ENCODE measurements at regions of chr22 and their contacts with region 1.

Region 1: DNA sequence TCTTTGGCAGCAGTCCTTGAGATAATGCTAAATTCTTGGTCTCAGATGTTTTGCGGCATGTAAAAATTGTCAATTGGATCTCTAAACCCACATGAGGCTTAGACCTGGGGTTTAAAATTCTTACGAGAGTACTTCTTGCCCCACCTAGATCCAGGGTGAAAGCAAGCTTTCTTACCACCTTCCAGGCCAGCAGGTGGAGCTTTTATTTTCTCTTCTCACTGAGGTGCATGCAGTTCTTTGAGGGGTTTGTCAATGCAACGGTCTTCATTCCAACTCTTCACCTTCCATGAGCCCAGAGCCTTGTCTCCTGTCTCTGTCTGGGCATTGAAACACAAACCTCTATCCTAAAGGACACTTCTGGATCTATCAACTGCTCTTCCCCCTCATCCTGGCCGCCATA is 154.1 kb downstream of the MYO18B start:
- DNase-seq: no peak
- ATAC-seq: no peak
- H3K4me3 Mint-ChIP-seq: no peak overlapping the region
- H3K27ac Mint-ChIP-seq: no peak overlapping the region
- H3K4me1 Mint-ChIP-seq: no peaks in the 10 kb centered on the region
- H3K27me3 Mint-ChIP-seq: peaks cover 4% of the 10 kb centered on the region
- CTCF ChIP-seq: no peak

Region 2: DNA sequence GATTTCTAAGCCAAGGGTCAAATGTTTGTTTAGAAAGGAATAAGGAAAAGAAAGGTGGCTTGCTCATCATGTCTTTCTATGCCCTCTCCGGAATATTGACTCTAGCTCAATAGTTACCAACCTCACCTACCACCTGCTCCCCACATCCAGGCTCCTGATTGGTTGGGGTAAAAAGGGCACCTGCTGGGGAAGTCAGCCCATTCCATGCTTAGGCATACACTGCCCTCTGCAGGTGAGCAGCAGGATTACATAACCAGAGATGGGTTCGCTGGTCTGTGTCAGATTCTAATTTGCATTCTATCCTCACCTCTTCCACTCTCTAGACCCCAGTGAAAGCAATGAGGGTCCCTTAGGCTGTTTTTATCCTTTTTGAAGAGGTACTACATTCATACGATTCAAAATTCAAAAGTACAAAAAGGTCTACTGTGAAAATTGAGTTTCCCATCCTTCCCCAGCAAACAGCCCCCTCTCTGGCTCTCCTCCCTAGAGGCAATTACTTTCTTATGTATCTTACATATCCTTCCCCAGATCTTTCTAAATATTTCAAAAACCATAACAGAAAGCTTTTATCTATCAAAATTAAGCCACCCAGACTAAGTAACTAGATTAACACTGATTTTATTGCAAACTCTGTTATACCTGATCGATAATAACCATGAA is 435.0 kb after region 1 on chr22:
- CTCF ChIA-PET with region 1: interaction called, 11 read pairs
- POLR2A ChIA-PET with region 1: no interaction called
- intact Hi-C with region 1: no loop called
- DNase-seq: peak; percentile 71
- ATAC-seq: peak; percentile 79
- H3K4me3 Mint-ChIP-seq: no peak overlapping the region
- H3K27ac Mint-ChIP-seq: no peak overlapping the region
- H3K4me1 Mint-ChIP-seq: no peaks in the 10 kb centered on the region
- H3K27me3 Mint-ChIP-seq: peaks cover 20% of the 10 kb centered on the region
- CTCF ChIP-seq: peak; percentile 95